ENCODE measurements at regions of chr7 and their contacts with region 1.

Region 1: GRCh38 chr7:32515890-32516550 is 20.7 kb downstream of the AVL9 start:
- DNase-seq: no peak
- H3K27ac ChIP-seq: no peak overlapping the region
- CTCF ChIP-seq: no peak

Region 2: DNA sequence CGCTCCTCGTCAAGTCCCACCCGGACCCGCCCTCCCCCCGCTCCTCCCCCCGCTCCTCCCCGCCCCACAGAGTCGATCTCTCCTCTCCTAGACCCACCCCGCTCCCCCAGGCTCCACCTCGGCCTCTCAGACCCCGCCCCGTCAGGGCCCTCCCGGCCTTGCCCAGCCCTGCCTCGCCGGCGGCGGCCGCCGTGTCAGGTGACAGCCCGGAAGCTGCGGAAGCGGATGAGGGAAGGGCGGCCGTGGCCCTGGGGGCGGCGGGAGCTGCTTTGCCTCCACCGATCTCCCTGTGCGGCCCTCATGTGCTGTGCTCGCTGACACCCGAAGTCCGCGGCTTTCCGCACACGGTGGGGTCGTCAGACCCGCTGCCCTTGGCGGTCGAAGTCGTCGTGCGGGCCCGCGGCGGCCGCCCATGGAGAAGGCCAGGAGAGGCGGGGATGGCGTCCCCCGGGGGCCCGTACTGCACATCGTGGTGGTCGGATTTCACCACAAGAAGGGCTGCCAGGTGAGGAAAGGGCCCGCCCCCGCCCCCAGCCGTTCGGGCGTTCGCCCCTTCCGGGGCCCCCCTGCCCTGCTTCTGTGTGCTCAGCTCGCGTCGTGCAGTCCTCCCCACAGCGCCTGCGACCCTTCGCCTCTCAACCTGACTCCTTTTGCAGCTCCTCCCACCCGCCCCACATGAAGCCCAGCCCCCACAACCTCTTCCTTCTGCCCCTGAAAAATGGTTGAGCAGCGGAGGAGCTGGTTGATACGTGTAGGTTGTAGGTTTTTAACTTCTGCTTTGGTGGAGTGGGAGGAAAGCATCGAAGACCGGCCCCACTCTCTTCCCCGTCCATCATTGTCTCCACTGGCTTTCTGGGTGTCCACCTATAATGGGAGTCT is 20.5 kb before region 1 on chr7 and contains the start of gene AVL9:
- CTCF ChIA-PET with region 1: interaction called, 11 read pairs
- POLR2A ChIA-PET with region 1: no interaction called
- DNase-seq: peak; percentile 98
- H3K27ac ChIP-seq: peak within 1 kb of the TSS; percentile 87
- CTCF ChIP-seq: no peak

Measured in RWPE1 (cell line).